Activated naive CD4-positive, alpha-beta T cell treated with anti-CD3 and anti-CD28 coated beads for 36 hours (primary cell): ENCODE measurements at regions of chr14 and their contacts with region 1.

Region 1: GRCh38 chr14:51996148-51996746 is 6.9 kb downstream of the RTRAF start:
- DNase-seq: no peak
- H3K4me3 Mint-ChIP-seq: no peak overlapping the region
- H3K27ac Mint-ChIP-seq: no peak overlapping the region
- H3K4me1 Mint-ChIP-seq: peaks cover 33% of the 10 kb centered on the region
- H3K27me3 Mint-ChIP-seq: no peaks in the 10 kb centered on the region

Region 2: GRCh38 chr14:52069304-52070050 is 73.2 kb after region 1 on chr14:
- CTCF ChIA-PET with region 1: interaction called, 3 read pairs
- intact Hi-C with region 1: loop called (anchors 5 kb)
- DNase-seq: peak; percentile 38
- H3K4me3 Mint-ChIP-seq: peak overlapping the region; percentile 38
- H3K27ac Mint-ChIP-seq: no peak overlapping the region
- H3K4me1 Mint-ChIP-seq: peaks cover 27% of the 10 kb centered on the region
- H3K27me3 Mint-ChIP-seq: peaks cover 49% of the 10 kb centered on the region

Region 3: DNA sequence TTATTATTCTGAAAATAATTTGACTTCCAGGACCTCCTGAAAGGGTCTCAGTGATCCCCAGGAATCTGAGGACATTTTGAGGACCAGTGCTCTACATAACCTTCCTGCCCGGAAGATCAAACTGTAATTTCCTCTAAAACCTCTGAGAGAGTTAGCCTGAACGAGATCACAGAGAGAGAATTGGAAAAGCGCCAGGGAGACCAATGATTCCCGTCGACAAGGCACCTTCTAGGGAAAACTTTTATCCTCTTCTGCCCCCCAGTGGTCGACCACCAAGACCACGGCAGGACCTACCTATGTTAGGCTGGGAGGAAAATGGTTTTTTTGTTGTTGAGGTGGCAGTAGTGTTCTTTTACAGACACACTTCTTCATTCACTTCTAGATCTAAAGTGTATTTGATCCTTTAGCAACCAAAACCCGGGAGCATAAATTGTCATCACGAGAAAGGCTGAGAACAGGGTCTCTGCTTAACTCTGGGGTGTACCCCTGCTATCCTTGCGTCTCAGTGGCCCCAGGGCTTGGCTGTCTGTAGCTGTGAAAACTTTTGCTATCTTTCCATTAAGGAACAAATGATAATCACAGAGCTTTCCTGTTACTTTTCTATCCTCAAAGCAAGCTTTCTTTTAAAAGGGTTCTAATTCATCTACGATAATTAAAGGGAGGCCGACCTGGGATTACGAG is 135.5 kb after region 1 on chr14:
- CTCF ChIA-PET with region 1: interaction called, 7 read pairs
- intact Hi-C with region 1: loop called (anchors 1 kb)
- DNase-seq: peak; percentile 72
- H3K4me3 Mint-ChIP-seq: no peak overlapping the region
- H3K27ac Mint-ChIP-seq: no peak overlapping the region
- H3K4me1 Mint-ChIP-seq: peaks cover 6% of the 10 kb centered on the region
- H3K27me3 Mint-ChIP-seq: peaks cover 12% of the 10 kb centered on the region

Region 4: GRCh38 chr14:52202151-52202550 is 205.9 kb after region 1 on chr14:
- CTCF ChIA-PET with region 1: no interaction called
- intact Hi-C with region 1: no loop called
- DNase-seq: no peak
- H3K4me3 Mint-ChIP-seq: no peak overlapping the region
- H3K27ac Mint-ChIP-seq: no peak overlapping the region
- H3K4me1 Mint-ChIP-seq: no peaks in the 10 kb centered on the region
- H3K27me3 Mint-ChIP-seq: peaks cover 6% of the 10 kb centered on the region